ENCODE measurements at regions of chr12 and their contacts with region 1.

Region 1: GRCh38 chr12:120200364-120200800 is 529 bp downstream of the RPLP0 start:
- DNase-seq: no peak
- ATAC-seq: no peak
- H3K4me3 ChIP-seq: peak overlapping the region; percentile 92
- H3K27ac ChIP-seq: peak overlapping the region; percentile 87
- H3K4me1 ChIP-seq: peaks cover 17% of the 10 kb centered on the region
- H3K27me3 ChIP-seq: no peaks in the 10 kb centered on the region
- CTCF ChIP-seq: no peak
- EP300 ChIP-seq: no peak
- POLR2A ChIP-seq: no peak
- RAD21 ChIP-seq: no peak

Region 2: GRCh38 chr12:119826661-119827445 is 373.5 kb before region 1 on chr12:
- CTCF ChIA-PET with region 1: no interaction called
- POLR2A ChIA-PET with region 1: no interaction called
- RAD21 ChIA-PET with region 1: no interaction called
- SMC1A ChIA-PET with region 1: no interaction called
- in situ Hi-C with region 1: no loop called
- intact Hi-C with region 1: no loop called
- DNase-seq: no peak
- ATAC-seq: no peak
- H3K4me3 ChIP-seq: no peak overlapping the region
- H3K27ac ChIP-seq: no peak overlapping the region
- H3K4me1 ChIP-seq: no peaks in the 10 kb centered on the region; the same call in 1 of the 2 replicates
- H3K27me3 ChIP-seq: no peaks in the 10 kb centered on the region
- CTCF ChIP-seq: no peak
- EP300 ChIP-seq: no peak
- POLR2A ChIP-seq: no peak
- RAD21 ChIP-seq: no peak

Region 3: GRCh38 chr12:119988782-119989668 is 211.4 kb before region 1 on chr12 and contains the start of gene BICDL1:
- CTCF ChIA-PET with region 1: interaction called, 5 read pairs
- POLR2A ChIA-PET with region 1: interaction called, 7 read pairs
- RAD21 ChIA-PET with region 1: interaction called, 17 read pairs
- SMC1A ChIA-PET with region 1: no interaction called
- in situ Hi-C with region 1: no loop called
- intact Hi-C with region 1: loop called (anchors 10 kb)
- DNase-seq: peak; percentile 69
- ATAC-seq: peak; percentile 91
- H3K4me3 ChIP-seq: peak within 1 kb of the TSS; percentile 82
- H3K27ac ChIP-seq: no peak within 1 kb of the TSS
- H3K4me1 ChIP-seq: peaks cover 6% of the 10 kb centered on the region
- H3K27me3 ChIP-seq: no peaks in the 10 kb centered on the region
- CTCF ChIP-seq: peak in 1 of 3 experiments; percentile 16; a peak in 1 of 6 replicates
- EP300 ChIP-seq: no peak
- POLR2A ChIP-seq: peak; percentile 60
- RAD21 ChIP-seq: no peak
- polyA plus RNA-seq, gene BICDL1: 0.72 to 1.2 TPM

Region 4: DNA sequence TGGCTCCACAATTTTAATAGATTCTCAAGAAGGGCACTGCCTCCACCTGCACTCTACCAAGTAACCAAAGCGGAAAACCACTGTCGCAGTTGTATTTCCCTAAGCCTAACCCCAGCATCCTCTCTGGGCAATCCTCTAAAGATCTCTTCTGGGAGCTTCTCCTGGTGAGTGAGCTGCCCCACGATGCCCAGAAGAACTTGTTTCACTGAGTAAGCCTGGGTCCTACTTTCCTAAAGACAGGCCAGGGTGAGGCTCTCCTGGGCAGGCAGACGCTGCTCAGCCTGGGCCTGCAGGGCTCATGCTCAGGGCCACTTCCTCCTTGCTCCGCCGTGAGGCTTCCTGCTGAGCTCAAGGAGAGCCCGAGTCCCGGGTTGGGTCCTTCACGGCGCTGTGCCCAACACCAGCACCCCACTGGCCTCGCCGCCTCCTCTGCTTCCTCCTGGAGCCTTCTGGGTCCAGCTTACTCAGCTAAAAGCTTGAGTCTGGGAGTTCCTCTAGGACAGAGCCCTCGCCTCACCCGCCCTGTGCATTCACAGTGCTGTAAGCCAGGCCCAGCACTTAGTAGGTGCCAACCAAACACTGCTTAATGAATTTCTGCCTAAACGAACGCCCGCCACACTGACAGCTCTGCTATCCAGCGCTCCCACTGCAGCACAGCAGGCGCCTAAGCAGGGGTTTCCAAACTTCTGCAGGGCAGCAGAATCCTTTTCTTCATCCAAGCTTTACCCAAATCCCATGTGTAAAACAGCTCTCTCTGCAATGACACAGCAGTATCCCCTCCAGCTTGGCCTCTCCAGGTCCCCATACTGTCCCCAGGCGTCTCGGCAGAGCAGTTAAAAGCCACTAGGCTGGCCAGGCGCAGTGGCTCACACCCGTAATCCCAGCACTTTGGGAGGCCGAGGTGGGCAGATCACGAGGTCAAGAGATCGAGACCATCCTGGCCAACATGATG is 89.6 kb before region 1 on chr12:
- CTCF ChIA-PET with region 1: interaction called, 18 read pairs
- POLR2A ChIA-PET with region 1: interaction called, 76 read pairs
- RAD21 ChIA-PET with region 1: interaction called, 58 read pairs
- SMC1A ChIA-PET with region 1: interaction called, 37 read pairs
- in situ Hi-C with region 1: no loop called
- intact Hi-C with region 1: no loop called
- DNase-seq: no peak
- ATAC-seq: peak; percentile 92
- H3K4me3 ChIP-seq: peak overlapping the region; percentile 62
- H3K27ac ChIP-seq: peak overlapping the region; percentile 56
- H3K4me1 ChIP-seq: peaks cover 49% of the 10 kb centered on the region
- H3K27me3 ChIP-seq: no peaks in the 10 kb centered on the region
- CTCF ChIP-seq: 0 out of 6 replicates have a peak, but pooled peaks have one; percentile 4 to 12 (median 8)
- EP300 ChIP-seq: no peak
- POLR2A ChIP-seq: peak; percentile 3
- RAD21 ChIP-seq: 0 out of 2 replicates have a peak, but pooled peaks have one; percentile 10

Region 5: DNA sequence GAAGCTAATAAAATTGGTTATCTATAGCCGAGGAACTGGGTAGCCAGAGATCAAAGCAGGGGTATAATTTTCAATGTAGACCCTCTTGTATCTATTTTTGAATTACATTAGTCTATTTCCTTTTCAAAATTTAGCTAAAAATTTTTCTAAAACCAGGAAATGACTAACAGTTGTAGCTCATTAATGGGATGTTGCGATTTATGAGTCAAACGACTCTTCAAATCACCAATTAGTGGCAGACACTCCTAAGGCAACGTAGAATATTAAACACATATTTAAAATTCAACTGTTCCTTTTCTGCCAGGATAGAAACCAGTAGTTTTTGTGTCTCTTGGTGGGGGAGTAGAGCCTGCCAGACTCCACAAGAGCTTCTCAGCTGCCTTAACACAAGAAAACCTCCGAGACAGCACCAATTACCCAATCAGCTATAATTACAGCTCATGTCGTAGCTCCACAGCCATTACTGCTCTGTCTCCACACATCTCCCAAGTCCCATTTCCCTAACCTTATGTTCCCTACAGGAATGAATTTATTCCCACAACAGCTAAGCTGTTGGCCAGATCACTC is 32.8 kb before region 1 on chr12:
- CTCF ChIA-PET with region 1: interaction called, 27 read pairs
- POLR2A ChIA-PET with region 1: interaction called, 9 read pairs
- RAD21 ChIA-PET with region 1: interaction called, 25 read pairs
- SMC1A ChIA-PET with region 1: interaction called, 10 read pairs
- in situ Hi-C with region 1: no loop called
- intact Hi-C with region 1: no loop called
- DNase-seq: no peak
- ATAC-seq: peak; percentile 46
- H3K4me3 ChIP-seq: no peak overlapping the region
- H3K27ac ChIP-seq: peak overlapping the region; percentile 76
- H3K4me1 ChIP-seq: peaks cover 19% of the 10 kb centered on the region
- H3K27me3 ChIP-seq: no peaks in the 10 kb centered on the region
- CTCF ChIP-seq: no peak
- EP300 ChIP-seq: no peak
- POLR2A ChIP-seq: no peak
- RAD21 ChIP-seq: no peak

Region 6: DNA sequence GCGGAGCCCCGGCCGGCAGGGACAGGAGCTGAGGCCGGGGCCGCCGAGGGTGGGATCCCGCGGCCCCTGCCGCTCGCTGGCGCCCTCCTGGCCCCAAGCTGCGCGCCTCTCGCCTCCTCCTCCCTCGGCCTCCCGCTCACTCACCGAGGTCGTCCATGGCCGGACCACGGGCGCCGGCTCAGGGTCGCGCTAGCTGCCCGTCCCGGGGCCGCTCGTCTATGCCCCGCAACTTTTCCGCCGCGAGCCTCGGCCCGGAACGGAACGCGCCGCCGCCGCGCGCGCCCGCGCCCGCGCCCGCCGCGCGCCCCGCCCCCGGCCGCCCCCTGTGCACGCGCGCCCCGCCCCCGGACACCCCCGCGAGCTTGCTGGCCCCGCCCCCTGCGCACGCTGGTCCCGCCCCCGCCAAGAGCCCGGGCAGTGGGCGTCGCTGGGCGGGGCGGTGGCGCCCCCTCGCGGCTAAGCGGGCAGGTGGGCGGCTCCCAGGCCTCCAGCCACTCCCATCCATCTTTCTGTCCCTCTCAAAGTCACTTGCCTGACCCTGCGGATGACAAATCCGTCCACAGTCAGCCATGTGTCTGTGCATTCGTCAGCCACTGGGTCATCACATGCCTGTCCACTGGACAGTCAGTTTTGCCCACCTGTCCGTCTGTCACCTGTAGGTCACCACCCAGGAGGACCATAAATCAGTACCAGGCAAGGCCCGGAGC is 65.2 kb after region 1 on chr12 and contains the start of gene PXN:
- CTCF ChIA-PET with region 1: interaction called, 14 read pairs
- POLR2A ChIA-PET with region 1: interaction called, 3 read pairs
- RAD21 ChIA-PET with region 1: interaction called, 24 read pairs
- SMC1A ChIA-PET with region 1: interaction called, 3 read pairs
- in situ Hi-C with region 1: no loop called
- intact Hi-C with region 1: loop called (anchors 2 kb)
- DNase-seq: peak; percentile 28
- ATAC-seq: peak; percentile 95
- H3K4me3 ChIP-seq: peak within 1 kb of the TSS; percentile 63
- H3K27ac ChIP-seq: no peak within 1 kb of the TSS
- H3K4me1 ChIP-seq: 0 out of 2 replicates have a peak, but pooled peaks cover 3% of the 10 kb centered on the region
- H3K27me3 ChIP-seq: peaks cover 1 to 4% of the 10 kb centered on the region in 2 experiments; a peak in 3 of 4 replicates
- CTCF ChIP-seq: peak; percentile 67 to 87 (median 74)
- EP300 ChIP-seq: no peak
- POLR2A ChIP-seq: peak; percentile 78
- RAD21 ChIP-seq: peak; percentile 81
- polyA plus RNA-seq, gene PXN: 2.5 to 2.6 TPM

Region 7: GRCh38 chr12:120356567-120357030 is 156.2 kb after region 1 on chr12:
- CTCF ChIA-PET with region 1: no interaction called
- POLR2A ChIA-PET with region 1: no interaction called
- RAD21 ChIA-PET with region 1: no interaction called
- SMC1A ChIA-PET with region 1: no interaction called
- in situ Hi-C with region 1: no loop called
- intact Hi-C with region 1: no loop called
- DNase-seq: peak; percentile 17
- ATAC-seq: peak; percentile 97
- H3K4me3 ChIP-seq: no peak overlapping the region
- H3K27ac ChIP-seq: no peak overlapping the region
- H3K4me1 ChIP-seq: no peaks in the 10 kb centered on the region
- H3K27me3 ChIP-seq: peaks cover 0 to 1% of the 10 kb centered on the region in 2 experiments; a peak in 1 of 4 replicates
- CTCF ChIP-seq: peak; percentile 85 to 94 (median 89)
- EP300 ChIP-seq: no peak
- POLR2A ChIP-seq: no peak
- RAD21 ChIP-seq: peak; percentile 75

Region 8: DNA sequence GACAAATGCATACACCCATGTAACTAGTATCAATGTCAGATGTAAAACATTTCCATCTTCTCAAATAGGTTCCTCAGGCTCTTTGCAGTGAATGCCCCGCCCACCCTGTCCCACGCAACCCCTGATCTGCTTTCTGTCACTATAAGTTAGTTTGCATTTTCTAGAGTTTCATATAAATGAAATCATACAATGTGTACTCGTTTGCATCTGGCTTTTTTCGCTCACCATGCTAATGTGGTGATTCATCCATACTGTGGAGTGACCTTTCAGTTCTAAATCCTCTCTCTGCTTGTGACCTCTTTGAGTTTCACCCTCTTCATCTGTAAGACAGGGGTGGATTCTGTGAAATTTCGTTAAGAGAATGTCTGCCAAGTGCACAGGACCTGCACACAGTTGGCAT is 199.1 kb after region 1 on chr12:
- CTCF ChIA-PET with region 1: no interaction called
- POLR2A ChIA-PET with region 1: no interaction called
- RAD21 ChIA-PET with region 1: no interaction called
- SMC1A ChIA-PET with region 1: no interaction called
- in situ Hi-C with region 1: no loop called
- intact Hi-C with region 1: no loop called
- DNase-seq: peak; percentile 5
- ATAC-seq: peak; percentile 61
- H3K4me3 ChIP-seq: no peak overlapping the region
- H3K27ac ChIP-seq: no peak overlapping the region
- H3K4me1 ChIP-seq: 0 out of 2 replicates have a peak, but pooled peaks cover 3% of the 10 kb centered on the region
- H3K27me3 ChIP-seq: no peaks in the 10 kb centered on the region; a peak in 2 of 4 replicates
- CTCF ChIP-seq: no peak
- EP300 ChIP-seq: no peak
- POLR2A ChIP-seq: no peak
- RAD21 ChIP-seq: no peak

Measured in GM12878 (cell line).